Dorsolateral prefrontal cortex (tissue), 120 donors: ENCODE measurements at regions of chr17 and their contacts with region 1.

Region 1: GRCh38 chr17:5438716-5439445 is at the start of gene C1QBP:
- DNase-seq: peak; percentile 84 to 93 (median 90)
- H3K4me3 ChIP-seq: peak within 1 kb of the TSS; percentile 63 to 100 (median 93)
- H3K27ac ChIP-seq: peak within 1 kb of the TSS; percentile 53 to 96 (median 88)
- H3K27me3 ChIP-seq: no peaks in the 10 kb centered on the region
- CTCF ChIP-seq: peak; percentile 97 to 100 (median 100)
- total RNA-seq, gene C1QBP: 45.6 to 101 (median 78.2) TPM

Region 2: GRCh38 chr17:5191541-5192417 is 247.1 kb before region 1 on chr17 and contains the start of gene ZNF594:
- intact Hi-C with region 1: loop called in 1 of 2 experiments (anchors 10 kb)
- DNase-seq: peak; percentile 88 to 97 (median 96)
- H3K4me3 ChIP-seq: peak within 1 kb of the TSS; percentile 62 to 99 (median 91)
- H3K27ac ChIP-seq: peak within 1 kb of the TSS; percentile 14 to 95 (median 87)
- H3K27me3 ChIP-seq: no peaks in the 10 kb centered on the region
- CTCF ChIP-seq: peak; percentile 41 to 92 (median 76)
- total RNA-seq, gene ZNF594: 14.7 to 32.7 (median 20.5) TPM

Region 3: DNA sequence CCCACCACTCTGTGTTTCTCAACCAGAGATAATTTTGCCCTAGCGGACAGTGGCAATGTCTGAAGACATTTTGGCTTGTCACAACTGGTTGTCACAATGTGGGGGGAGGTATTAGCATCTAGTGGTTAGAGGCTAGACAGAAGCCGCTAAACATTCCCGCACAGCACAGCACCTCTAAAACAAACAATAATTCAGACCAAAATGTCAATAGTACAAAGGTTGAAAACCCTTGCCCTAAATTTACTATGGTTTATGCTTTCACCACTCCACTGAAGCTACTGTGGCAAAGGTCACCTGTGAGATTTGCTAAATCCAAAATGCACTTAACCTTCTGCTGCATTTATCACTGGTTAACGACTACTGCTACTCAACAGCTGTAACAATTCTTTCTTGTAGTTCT is 33.5 kb before region 1 on chr17:
- intact Hi-C with region 1: no loop called
- DNase-seq: no peak
- H3K4me3 ChIP-seq: no peak overlapping the region
- H3K27ac ChIP-seq: no peak overlapping the region
- H3K27me3 ChIP-seq: no peaks in the 10 kb centered on the region
- CTCF ChIP-seq: no peak

Region 4: GRCh38 chr17:5419356-5419958 is 19.4 kb before region 1 on chr17 and contains the start of gene NUP88:
- intact Hi-C with region 1: loop called in 1 of 2 experiments (anchors 2 kb)
- DNase-seq: peak; percentile 94 to 98 (median 98)
- H3K4me3 ChIP-seq: peak within 1 kb of the TSS; percentile 59 to 99 (median 91)
- H3K27ac ChIP-seq: peak within 1 kb of the TSS; percentile 44 to 94 (median 86)
- H3K27me3 ChIP-seq: no peaks in the 10 kb centered on the region
- CTCF ChIP-seq: peak in 16 of 56 donors; percentile 4 to 62 (median 23)
- total RNA-seq, gene NUP88: 34.5 to 69.6 (median 50.1) TPM

Region 5: GRCh38 chr17:5468075-5468473 is 29.2 kb after region 1 on chr17:
- intact Hi-C with region 1: loop called in 1 of 2 experiments (anchors 1 kb)
- DNase-seq: peak in 1 of 10 donors; percentile 11
- H3K4me3 ChIP-seq: peak overlapping the region; percentile 77 to 100 (median 97)
- H3K27ac ChIP-seq: peak overlapping the region in 30 of 59 donors; percentile 47 to 92 (median 77)
- H3K27me3 ChIP-seq: no peaks in the 10 kb centered on the region
- CTCF ChIP-seq: no peak

Region 6: GRCh38 chr17:5486204-5487124 is 47.6 kb after region 1 on chr17 and contains the start of gene MIS12:
- intact Hi-C with region 1: loop called (anchors 1 to 2 kb)
- DNase-seq: peak; percentile 94 to 99 (median 99)
- H3K4me3 ChIP-seq: peak within 1 kb of the TSS; percentile 72 to 100 (median 95)
- H3K27ac ChIP-seq: peak within 1 kb of the TSS; percentile 89 to 100 (median 98)
- H3K27me3 ChIP-seq: no peaks in the 10 kb centered on the region
- CTCF ChIP-seq: peak in 5 of 56 donors; percentile 8 to 30 (median 11)
- total RNA-seq, gene MIS12: 8.2 to 24.0 (median 13.7) TPM